ENCODE measurements at regions of chr20 and their contacts with region 1.

Region 1: DNA sequence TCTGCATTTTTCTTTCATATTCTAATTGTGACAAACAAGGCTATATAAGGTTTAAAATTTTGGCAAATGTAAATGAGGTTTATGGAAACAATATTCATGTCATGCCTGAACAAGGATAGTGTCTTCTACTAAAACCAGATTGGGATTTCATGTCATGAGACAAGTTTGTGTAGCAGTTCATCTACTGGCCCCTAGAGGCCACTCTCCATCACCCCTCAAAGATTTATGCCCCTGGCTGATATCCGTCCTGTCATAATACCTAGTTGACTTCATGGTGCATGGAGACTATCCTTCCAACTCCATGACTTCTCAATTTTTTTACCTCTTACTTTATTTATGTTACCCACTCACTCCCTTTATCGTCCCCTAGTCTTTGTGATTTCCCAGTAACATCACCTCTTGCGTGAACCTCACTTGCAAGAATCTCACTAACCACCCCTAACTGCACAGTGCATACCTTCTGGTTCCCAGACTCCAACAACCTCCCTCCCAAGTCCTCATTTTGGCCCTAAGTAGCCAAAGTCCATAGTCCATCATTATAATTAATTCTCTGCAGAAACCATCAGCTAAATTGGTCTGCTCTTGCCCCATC is 179.8 kb downstream of the TASP1 start:
- DNase-seq: peak; percentile 60
- H3K4me3 ChIP-seq: no peak overlapping the region
- H3K27ac ChIP-seq: no peak overlapping the region
- H3K4me1 ChIP-seq: no peaks in the 10 kb centered on the region
- H3K27me3 ChIP-seq: no peaks in the 10 kb centered on the region

Region 2: GRCh38 chr20:13546497-13547131 is 87.7 kb after region 1 on chr20:
- in situ Hi-C with region 1: loop called (anchors 10 kb)
- DNase-seq: peak; percentile 81
- H3K4me3 ChIP-seq: no peak overlapping the region
- H3K27ac ChIP-seq: no peak overlapping the region
- H3K4me1 ChIP-seq: peaks cover 14% of the 10 kb centered on the region; the same call in 1 of the 2 replicates
- H3K27me3 ChIP-seq: no peaks in the 10 kb centered on the region